MCF 10A (cell line): ENCODE measurements at regions of chr12 and their contacts with region 1.

Region 1: DNA sequence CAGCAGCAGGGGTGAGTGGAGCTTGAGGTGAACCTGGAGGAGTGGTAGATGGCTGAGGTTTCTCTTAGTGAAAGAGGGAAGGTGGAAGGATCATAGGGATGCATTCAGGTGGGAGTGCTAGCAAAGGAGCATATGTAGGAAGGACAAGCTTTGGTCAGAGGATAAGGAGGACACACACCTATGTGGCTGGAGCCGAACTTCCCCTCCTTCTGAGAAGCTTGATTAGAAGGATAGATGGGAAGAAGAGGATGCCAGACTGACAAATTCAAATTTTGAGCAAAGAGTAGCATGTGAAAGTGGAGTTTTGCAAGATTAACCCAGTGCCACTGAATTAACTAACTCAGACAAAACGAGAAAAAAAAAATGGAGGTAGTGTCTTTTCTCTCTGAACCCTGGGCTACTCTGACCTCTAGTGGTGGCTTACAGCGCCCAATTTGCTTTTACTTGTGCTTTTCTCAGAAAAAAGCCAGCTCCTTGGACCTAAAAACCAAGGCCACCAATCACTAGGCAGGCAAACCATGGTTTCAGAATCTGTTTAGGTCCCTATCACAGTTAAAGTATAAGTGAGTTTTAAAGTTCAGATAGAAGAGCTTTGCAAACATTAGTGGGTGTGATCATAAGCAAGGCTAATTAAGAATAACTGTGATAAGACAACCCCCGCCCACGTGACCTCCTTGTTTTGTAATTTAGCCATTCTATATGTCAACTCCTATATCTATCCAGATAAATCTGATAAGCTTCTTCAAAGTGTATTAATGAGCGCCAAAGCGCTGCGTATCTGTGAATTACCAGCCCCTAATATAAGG is 15.5 kb downstream of the EMP1 start:
- DNase-seq: peak; percentile 78
- H3K4me3 Mint-ChIP-seq: peak overlapping the region; percentile 0
- H3K27ac Mint-ChIP-seq: peak overlapping the region; percentile 20
- H3K4me1 Mint-ChIP-seq: peaks cover 43% of the 10 kb centered on the region
- H3K27me3 Mint-ChIP-seq: no peaks in the 10 kb centered on the region
- CTCF ChIP-seq: peak; percentile 69

Region 2: GRCh38 chr12:12456637-12457036 is 755.4 kb before region 1 on chr12:
- CTCF ChIA-PET with region 1: no interaction called
- POLR2A ChIA-PET with region 1: no interaction called
- intact Hi-C with region 1: no loop called
- DNase-seq: peak; percentile 48
- H3K4me3 Mint-ChIP-seq: no peak overlapping the region
- H3K27ac Mint-ChIP-seq: peak overlapping the region; percentile 16
- H3K4me1 Mint-ChIP-seq: no peaks in the 10 kb centered on the region
- H3K27me3 Mint-ChIP-seq: no peaks in the 10 kb centered on the region
- CTCF ChIP-seq: no peak

Region 3: DNA sequence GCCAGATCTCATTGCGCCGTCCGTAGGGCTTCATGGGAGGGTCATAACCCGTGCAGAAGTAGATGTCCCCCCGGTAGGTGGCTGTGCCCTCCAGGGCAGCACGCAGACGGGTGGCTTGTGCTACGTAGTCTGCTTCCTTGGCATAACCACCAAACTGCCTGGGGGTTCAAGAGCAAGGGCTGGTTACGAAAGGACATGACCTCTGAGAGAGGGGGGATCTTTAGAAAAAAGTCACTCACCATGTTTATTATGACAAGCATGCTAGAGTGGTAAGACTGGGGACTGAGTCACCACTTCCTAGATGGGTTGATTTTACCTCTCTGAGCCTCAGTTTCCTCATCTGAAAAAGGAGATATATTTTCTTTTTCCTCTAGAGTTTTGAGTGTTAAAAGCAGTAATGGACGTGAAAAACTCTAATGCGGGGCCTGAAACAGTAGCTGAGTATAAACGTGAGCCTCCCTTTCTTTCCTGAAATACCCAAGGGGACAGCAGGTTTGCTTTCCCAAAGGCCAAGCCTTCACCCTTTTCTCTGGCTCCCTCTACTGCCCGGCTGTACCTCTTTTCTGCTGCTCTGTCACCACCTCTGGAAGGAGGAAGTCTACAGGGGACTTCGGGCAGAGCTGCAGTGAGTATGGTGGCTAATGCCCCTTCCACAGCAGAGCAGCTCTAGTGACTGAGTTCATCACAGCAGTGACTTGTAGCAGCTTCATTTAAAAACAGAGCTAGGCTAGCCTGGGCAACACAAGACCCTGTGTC is 236.6 kb before region 1 on chr12:
- CTCF ChIA-PET with region 1: interaction called, 15 read pairs
- POLR2A ChIA-PET with region 1: interaction called, 5 read pairs
- intact Hi-C with region 1: loop called (anchors 5 kb)
- DNase-seq: peak; percentile 55
- H3K4me3 Mint-ChIP-seq: no peak overlapping the region
- H3K27ac Mint-ChIP-seq: peak overlapping the region; percentile 85
- H3K4me1 Mint-ChIP-seq: peaks cover 12% of the 10 kb centered on the region
- H3K27me3 Mint-ChIP-seq: no peaks in the 10 kb centered on the region
- CTCF ChIP-seq: peak; percentile 23

Region 4: DNA sequence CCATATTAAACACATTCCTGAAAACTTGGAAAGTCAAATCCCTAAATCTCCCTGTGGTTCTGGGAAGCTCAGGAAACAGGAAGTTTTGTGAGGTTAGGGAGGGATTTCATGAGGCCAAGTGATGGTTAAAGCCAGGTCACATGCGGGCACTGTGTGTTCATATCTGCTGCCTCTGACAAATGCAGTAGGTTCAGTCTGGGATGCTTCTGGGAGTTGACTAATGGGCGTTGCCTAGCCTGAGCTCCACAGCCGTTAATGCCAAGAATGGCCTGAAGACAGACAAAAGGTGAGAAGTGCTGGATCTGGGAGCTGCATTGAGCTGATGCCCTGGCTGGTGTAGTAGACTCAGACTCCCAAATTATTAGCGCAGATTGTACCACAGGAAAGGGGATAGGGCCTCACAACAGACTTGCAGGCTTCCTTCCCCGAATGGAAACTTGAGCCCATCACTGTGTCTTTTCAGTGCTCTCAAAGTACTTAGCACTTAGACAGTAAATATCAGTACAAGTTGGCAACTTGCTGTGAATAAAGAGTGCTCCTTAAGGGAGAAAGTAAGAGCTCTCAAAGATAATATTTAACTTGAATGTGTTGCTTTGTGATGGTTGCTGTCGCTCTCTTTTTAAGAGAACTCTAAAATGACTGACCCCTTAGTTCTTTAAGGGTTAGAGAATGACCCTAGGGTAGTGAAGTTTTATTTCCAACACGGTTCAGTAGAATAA is 125.9 kb before region 1 on chr12:
- CTCF ChIA-PET with region 1: interaction called, 13 read pairs
- POLR2A ChIA-PET with region 1: interaction called, 6 read pairs
- intact Hi-C with region 1: no loop called
- DNase-seq: no peak
- H3K4me3 Mint-ChIP-seq: no peak overlapping the region
- H3K27ac Mint-ChIP-seq: no peak overlapping the region
- H3K4me1 Mint-ChIP-seq: peaks cover 7% of the 10 kb centered on the region
- H3K27me3 Mint-ChIP-seq: no peaks in the 10 kb centered on the region
- CTCF ChIP-seq: no peak

Region 5: GRCh38 chr12:13135371-13136178 is 76.5 kb before region 1 on chr12:
- CTCF ChIA-PET with region 1: interaction called, 65 read pairs
- POLR2A ChIA-PET with region 1: interaction called, 15 read pairs
- intact Hi-C with region 1: no loop called
- DNase-seq: peak; percentile 94
- H3K4me3 Mint-ChIP-seq: peak overlapping the region; percentile 67
- H3K27ac Mint-ChIP-seq: peak overlapping the region; percentile 76
- H3K4me1 Mint-ChIP-seq: peaks cover 41% of the 10 kb centered on the region
- H3K27me3 Mint-ChIP-seq: no peaks in the 10 kb centered on the region
- CTCF ChIP-seq: peak; percentile 19

Region 6: DNA sequence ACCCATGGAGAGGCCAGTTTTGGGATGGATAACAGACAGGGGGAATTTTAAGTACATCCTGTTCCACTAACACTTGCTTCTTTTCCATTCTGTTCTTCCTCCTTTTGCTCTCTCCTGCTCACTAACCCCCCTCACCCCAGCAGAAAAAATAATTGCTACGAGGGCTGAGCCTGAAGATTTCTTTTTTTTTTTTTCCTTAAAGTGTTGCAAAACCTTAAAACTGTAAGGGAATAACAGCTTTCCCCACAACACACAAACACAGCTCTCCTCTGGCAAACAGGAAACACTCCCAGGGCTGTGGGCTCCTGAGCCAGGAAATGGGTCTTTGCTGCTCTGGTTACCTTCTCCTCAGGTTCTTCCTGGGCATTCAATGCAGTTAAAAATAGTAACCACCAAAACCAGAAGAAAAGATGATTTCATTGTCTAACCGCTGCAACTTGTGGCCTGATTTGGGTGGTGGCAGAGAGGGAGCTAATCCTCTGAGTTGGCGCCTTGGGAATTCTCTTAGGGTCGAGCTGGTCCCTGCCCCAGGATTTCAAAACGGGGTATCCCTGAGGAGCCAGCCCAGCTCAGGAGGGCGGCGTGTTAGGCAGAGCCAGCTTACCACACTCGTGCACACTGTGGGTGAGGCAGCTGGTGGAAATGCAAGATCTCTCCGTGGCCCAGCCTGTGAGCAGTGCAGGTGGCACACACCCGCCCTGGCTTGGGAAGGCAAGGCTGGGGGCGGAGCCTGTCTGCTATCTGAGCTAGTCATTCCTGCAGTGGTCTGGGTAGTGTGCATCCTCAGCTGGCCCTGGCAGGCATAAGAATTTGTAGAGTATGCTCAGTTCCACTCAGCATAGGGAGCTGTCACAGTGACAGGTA is 32.6 kb before region 1 on chr12:
- CTCF ChIA-PET with region 1: interaction called, 21 read pairs
- POLR2A ChIA-PET with region 1: interaction called, 6 read pairs
- intact Hi-C with region 1: no loop called
- DNase-seq: peak; percentile 64
- H3K4me3 Mint-ChIP-seq: peak overlapping the region; percentile 49
- H3K27ac Mint-ChIP-seq: peak overlapping the region; percentile 69
- H3K4me1 Mint-ChIP-seq: peaks cover 24% of the 10 kb centered on the region
- H3K27me3 Mint-ChIP-seq: no peaks in the 10 kb centered on the region
- CTCF ChIP-seq: no peak

Region 7: DNA sequence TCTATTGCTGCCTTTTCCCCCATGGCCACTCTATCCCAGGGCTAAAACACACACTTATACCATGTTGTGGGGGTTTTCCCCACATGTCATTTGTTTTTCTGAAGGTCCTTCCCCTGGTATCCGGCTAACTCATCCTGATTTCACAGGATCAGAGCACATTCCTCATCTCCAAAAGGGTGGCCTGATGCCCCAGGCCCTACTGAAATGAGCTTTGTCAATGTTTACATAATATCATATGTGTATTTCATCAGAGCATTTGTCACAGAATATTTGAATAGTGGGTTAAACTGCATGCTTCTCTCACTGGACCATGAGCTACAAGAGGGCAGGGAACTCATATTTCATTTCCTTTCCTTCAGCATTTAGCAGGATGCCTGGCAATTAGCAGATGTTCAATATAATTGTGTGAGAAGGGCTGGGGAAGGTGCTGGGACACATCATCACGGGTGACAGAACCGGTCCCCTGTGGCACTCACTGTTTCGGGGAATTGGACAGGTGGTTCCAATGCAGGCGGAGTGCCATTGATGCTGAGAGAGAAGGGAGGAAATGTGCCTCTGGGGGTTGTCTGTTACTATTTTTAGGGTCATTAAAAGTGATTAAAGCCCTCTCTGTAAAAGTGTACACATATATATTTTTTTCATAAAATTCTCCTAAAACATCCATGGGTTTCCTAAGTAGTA is 11.3 kb after region 1 on chr12:
- CTCF ChIA-PET with region 1: interaction called, 86 read pairs
- POLR2A ChIA-PET with region 1: interaction called, 37 read pairs
- intact Hi-C with region 1: no loop called
- DNase-seq: peak; percentile 92
- H3K4me3 Mint-ChIP-seq: peak overlapping the region; percentile 15
- H3K27ac Mint-ChIP-seq: peak overlapping the region; percentile 80
- H3K4me1 Mint-ChIP-seq: peaks cover 43% of the 10 kb centered on the region
- H3K27me3 Mint-ChIP-seq: no peaks in the 10 kb centered on the region
- CTCF ChIP-seq: no peak

Region 8: GRCh38 chr12:13390381-13390861 is 178.4 kb after region 1 on chr12:
- CTCF ChIA-PET with region 1: no interaction called
- POLR2A ChIA-PET with region 1: no interaction called
- intact Hi-C with region 1: no loop called
- DNase-seq: peak; percentile 97
- H3K4me3 Mint-ChIP-seq: no peak overlapping the region
- H3K27ac Mint-ChIP-seq: no peak overlapping the region
- H3K4me1 Mint-ChIP-seq: peaks cover 6% of the 10 kb centered on the region
- H3K27me3 Mint-ChIP-seq: peaks cover 11% of the 10 kb centered on the region
- CTCF ChIP-seq: no peak